ENCODE measurements at regions of chr10 and their contacts with region 1.

Region 1: GRCh38 chr10:33115738-33116719 is 158.0 kb upstream of the ITGB1 start:
- DNase-seq: peak in 1 of 2 donors; percentile 73
- ATAC-seq: no peak
- H3K4me3 ChIP-seq: no peak overlapping the region
- H3K4me3 Mint-ChIP-seq: peak overlapping the region; percentile 31
- H3K27ac ChIP-seq: no peak overlapping the region
- H3K27ac Mint-ChIP-seq: peak overlapping the region; percentile 35 to 93
- H3K4me1 ChIP-seq: peaks cover 63% of the 10 kb centered on the region
- H3K4me1 Mint-ChIP-seq: peaks cover 90 to 91% of the 10 kb centered on the region in 2 donors
- H3K27me3 ChIP-seq: no peaks in the 10 kb centered on the region
- H3K27me3 Mint-ChIP-seq: no peaks in the 10 kb centered on the region
- CTCF ChIP-seq: no peak

Region 2: GRCh38 chr10:32958085-32959005 is 157.7 kb before region 1 on chr10 and contains the start of gene ITGB1:
- intact Hi-C with region 1: loop called (anchors 10 kb)
- DNase-seq: peak; percentile 85 to 90
- ATAC-seq: peak; percentile 88 to 95 (median 93)
- H3K4me3 ChIP-seq: peak within 1 kb of the TSS; percentile 64
- H3K4me3 Mint-ChIP-seq: peak within 1 kb of the TSS; percentile 94
- H3K27ac ChIP-seq: peak within 1 kb of the TSS; percentile 63
- H3K27ac Mint-ChIP-seq: peak within 1 kb of the TSS; percentile 86 to 94
- H3K4me1 ChIP-seq: peaks cover 27% of the 10 kb centered on the region
- H3K4me1 Mint-ChIP-seq: peaks cover 44 to 47% of the 10 kb centered on the region in 2 donors
- H3K27me3 ChIP-seq: no peaks in the 10 kb centered on the region
- H3K27me3 Mint-ChIP-seq: no peaks in the 10 kb centered on the region
- CTCF ChIP-seq: no peak
- total RNA-seq, gene ITGB1: 175 to 280 (median 202) TPM

Region 3: DNA sequence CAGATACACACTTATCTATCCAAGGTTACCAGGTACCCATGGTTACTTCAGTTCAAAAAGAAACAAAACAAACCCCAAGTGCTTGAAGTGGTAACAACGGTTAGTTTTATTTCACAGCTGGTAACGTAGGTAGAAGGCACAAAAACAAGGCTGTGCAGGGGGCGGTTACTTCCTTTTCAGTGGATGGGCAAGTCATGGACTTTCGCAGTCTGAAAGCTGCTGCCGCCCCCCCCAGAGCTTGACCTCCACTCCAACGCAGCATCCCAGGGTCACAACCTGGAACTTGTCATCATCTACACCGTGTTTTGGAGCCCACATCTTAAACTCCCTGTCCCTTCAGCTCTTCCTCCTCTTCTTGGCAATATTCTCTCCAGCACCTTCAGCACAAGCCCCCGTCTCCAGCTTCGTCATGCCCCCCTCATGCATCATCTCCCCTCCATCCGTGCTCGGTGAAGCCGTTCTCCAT is 23.2 kb after region 1 on chr10:
- intact Hi-C with region 1: loop called (anchors 2 kb)
- DNase-seq: peak; percentile 60 to 95
- ATAC-seq: peak; percentile 78 to 94 (median 84)
- H3K4me3 ChIP-seq: no peak overlapping the region
- H3K4me3 Mint-ChIP-seq: peak overlapping the region; percentile 38
- H3K27ac ChIP-seq: peak overlapping the region; percentile 66
- H3K27ac Mint-ChIP-seq: peak overlapping the region; percentile 75 to 88
- H3K4me1 ChIP-seq: peaks cover 55% of the 10 kb centered on the region
- H3K4me1 Mint-ChIP-seq: peaks cover 44 to 51% of the 10 kb centered on the region in 2 donors
- H3K27me3 ChIP-seq: no peaks in the 10 kb centered on the region
- H3K27me3 Mint-ChIP-seq: no peaks in the 10 kb centered on the region
- CTCF ChIP-seq: no peak

Region 4: GRCh38 chr10:33781606-33782395 is 665.8 kb after region 1 on chr10:
- intact Hi-C with region 1: no loop called
- DNase-seq: no peak
- ATAC-seq: no peak
- H3K4me3 ChIP-seq: no peak overlapping the region
- H3K4me3 Mint-ChIP-seq: no peak overlapping the region
- H3K27ac ChIP-seq: no peak overlapping the region
- H3K27ac Mint-ChIP-seq: no peak overlapping the region
- H3K4me1 ChIP-seq: no peaks in the 10 kb centered on the region
- H3K4me1 Mint-ChIP-seq: peaks cover 6 to 14% of the 10 kb centered on the region in 2 donors
- H3K27me3 ChIP-seq: no peaks in the 10 kb centered on the region
- H3K27me3 Mint-ChIP-seq: peaks cover 0 to 3% of the 10 kb centered on the region in 2 donors
- CTCF ChIP-seq: no peak